PC-3 (cell line): ENCODE measurements at regions of chr3 and their contacts with region 1.

Region 1: GRCh38 chr3:78506581-78507195 is 1261.1 kb downstream of the ROBO1 start:
- DNase-seq: peak; percentile 95
- ATAC-seq: peak; percentile 96
- H3K4me3 ChIP-seq: peak overlapping the region; percentile 29; the same call in 1 of the 2 replicates
- H3K27ac ChIP-seq: peak overlapping the region; percentile 79
- H3K4me1 ChIP-seq: peaks cover 27% of the 10 kb centered on the region
- H3K27me3 ChIP-seq: no peaks in the 10 kb centered on the region
- CTCF ChIP-seq: no peak

Region 2: GRCh38 chr3:78343221-78343620 is 163.5 kb before region 1 on chr3:
- CTCF ChIA-PET with region 1: no interaction called
- POLR2A ChIA-PET with region 1: no interaction called
- intact Hi-C with region 1: loop called (anchors 5 kb)
- DNase-seq: peak; percentile 42
- ATAC-seq: peak; percentile 93
- H3K4me3 ChIP-seq: no peak overlapping the region
- H3K27ac ChIP-seq: peak overlapping the region; percentile 36
- H3K4me1 ChIP-seq: peaks cover 11% of the 10 kb centered on the region
- H3K27me3 ChIP-seq: no peaks in the 10 kb centered on the region
- CTCF ChIP-seq: no peak

Region 3: GRCh38 chr3:78690766-78691165 is 184.1 kb after region 1 on chr3:
- CTCF ChIA-PET with region 1: no interaction called
- POLR2A ChIA-PET with region 1: no interaction called
- intact Hi-C with region 1: no loop called
- DNase-seq: no peak
- ATAC-seq: no peak; the same call in 1 of the 2 replicates
- H3K4me3 ChIP-seq: no peak overlapping the region
- H3K27ac ChIP-seq: no peak overlapping the region
- H3K4me1 ChIP-seq: 0 out of 2 replicates have a peak, but pooled peaks cover 3% of the 10 kb centered on the region
- H3K27me3 ChIP-seq: no peaks in the 10 kb centered on the region
- CTCF ChIP-seq: no peak